PC-9 (cell line): ENCODE measurements at regions of chr22 and their contacts with region 1.

Region 1: DNA sequence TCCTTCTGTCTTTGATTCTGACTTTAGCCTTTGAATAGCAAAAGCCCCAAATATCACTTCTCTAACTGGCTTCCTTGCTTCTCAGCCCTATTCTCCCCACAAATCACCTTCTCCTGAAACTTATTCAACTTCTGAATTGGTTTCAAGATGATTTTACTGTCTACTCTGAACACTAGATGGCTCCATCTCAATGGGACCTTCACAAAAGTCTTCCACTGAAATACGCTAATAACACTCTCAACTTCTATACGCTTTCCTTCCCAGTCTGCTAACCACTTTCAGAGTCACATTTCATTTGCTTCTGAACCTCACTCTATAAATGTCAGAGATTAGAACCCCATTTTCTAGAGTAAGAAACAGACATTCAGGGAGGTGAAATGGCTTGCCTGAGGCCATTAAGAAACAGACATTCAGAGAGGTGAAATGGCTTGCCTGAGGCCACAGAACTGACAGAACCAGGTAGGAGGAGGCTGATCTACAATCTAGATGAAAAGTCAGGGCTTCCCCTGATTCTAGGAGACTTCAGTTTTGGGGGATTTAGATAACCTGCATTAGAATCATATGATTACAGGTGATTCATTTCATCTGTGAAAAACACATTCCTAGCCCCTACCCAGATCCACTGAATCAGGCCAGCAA is 20.6 kb downstream of the MORC2 start:
- DNase-seq: no peak
- H3K4me3 ChIP-seq: no peak overlapping the region
- H3K27ac ChIP-seq: no peak overlapping the region
- H3K4me1 ChIP-seq: no peaks in the 10 kb centered on the region
- H3K27me3 ChIP-seq: no peaks in the 10 kb centered on the region
- CTCF ChIP-seq: peak; percentile 75

Region 2: GRCh38 chr22:31230871-31231621 is 283.1 kb after region 1 on chr22:
- CTCF ChIA-PET with region 1: no interaction called
- POLR2A ChIA-PET with region 1: interaction called, 6 read pairs
- intact Hi-C with region 1: loop called (anchors 5 kb)
- DNase-seq: peak; percentile 30 to 68
- H3K4me3 ChIP-seq: no peak overlapping the region
- H3K27ac ChIP-seq: no peak overlapping the region
- H3K4me1 ChIP-seq: peaks cover 17% of the 10 kb centered on the region
- H3K27me3 ChIP-seq: no peaks in the 10 kb centered on the region
- CTCF ChIP-seq: peak; percentile 83